CD4-positive, alpha-beta T cell (primary cell): ENCODE measurements at regions of chr17 and their contacts with region 1.

Region 1: DNA sequence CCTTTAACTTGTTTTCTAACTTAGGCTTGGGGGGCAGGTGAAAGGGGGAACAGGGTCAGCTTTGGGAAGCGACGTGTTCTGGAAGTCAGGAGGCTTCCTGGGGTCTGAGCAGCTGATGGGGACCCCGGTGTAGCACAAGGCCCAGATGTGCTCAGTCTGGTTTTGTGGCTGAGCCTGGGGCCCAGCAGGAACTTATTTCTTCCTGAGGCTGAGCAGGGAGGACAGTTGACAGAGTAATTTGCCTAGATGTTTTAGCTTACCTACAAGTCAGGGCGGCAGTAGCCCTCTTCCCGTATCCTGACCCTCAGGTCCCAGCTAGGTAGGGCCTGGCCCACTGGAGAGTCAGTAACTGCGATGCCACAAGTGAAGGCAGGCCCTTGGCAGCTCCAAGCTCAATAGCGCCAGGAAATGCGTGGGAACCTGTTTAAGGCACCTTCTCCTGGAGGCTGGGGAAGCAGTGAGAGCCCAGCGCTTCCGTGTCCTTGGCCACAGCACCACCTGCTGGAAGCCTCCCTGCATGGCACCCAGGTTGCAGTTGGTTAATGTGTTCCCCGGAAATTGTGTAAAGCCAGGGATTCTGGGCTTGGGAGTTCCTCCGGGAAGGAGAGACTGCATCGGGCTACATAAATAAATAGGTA is 5.2 kb downstream of the CCR7 start:
- DNase-seq: peak; percentile 74 to 90 (median 80)
- ATAC-seq: peak; percentile 33
- H3K4me3 ChIP-seq: peak overlapping the region; percentile 97
- H3K4me3 Mint-ChIP-seq: peak overlapping the region; percentile 91
- H3K27ac ChIP-seq: peak overlapping the region; percentile 92 to 100
- H3K27ac Mint-ChIP-seq: peak overlapping the region; percentile 92
- H3K4me1 ChIP-seq: peaks cover 97% of the 10 kb centered on the region
- H3K4me1 Mint-ChIP-seq: peaks cover 90% of the 10 kb centered on the region
- H3K27me3 ChIP-seq: no peaks in the 10 kb centered on the region
- H3K27me3 Mint-ChIP-seq: no peaks in the 10 kb centered on the region
- CTCF ChIP-seq: peak; percentile 97

Region 2: GRCh38 chr17:40355123-40355803 is 204.8 kb before region 1 on chr17:
- CTCF ChIA-PET with region 1: interaction called, 4 read pairs
- POLR2A ChIA-PET with region 1: no interaction called
- intact Hi-C with region 1: loop called (anchors 1 kb)
- DNase-seq: peak; percentile 65 to 86 (median 78)
- ATAC-seq: peak; percentile 76
- H3K4me3 ChIP-seq: no peak overlapping the region
- H3K4me3 Mint-ChIP-seq: no peak overlapping the region
- H3K27ac ChIP-seq: no peak overlapping the region
- H3K27ac Mint-ChIP-seq: peak overlapping the region; percentile 36
- H3K4me1 ChIP-seq: peaks cover 15% of the 10 kb centered on the region
- H3K4me1 Mint-ChIP-seq: peaks cover 17% of the 10 kb centered on the region
- H3K27me3 ChIP-seq: peaks cover 0 to 3% of the 10 kb centered on the region in 2 experiments
- H3K27me3 Mint-ChIP-seq: peaks cover 3% of the 10 kb centered on the region
- CTCF ChIP-seq: peak; percentile 95

Region 3: DNA sequence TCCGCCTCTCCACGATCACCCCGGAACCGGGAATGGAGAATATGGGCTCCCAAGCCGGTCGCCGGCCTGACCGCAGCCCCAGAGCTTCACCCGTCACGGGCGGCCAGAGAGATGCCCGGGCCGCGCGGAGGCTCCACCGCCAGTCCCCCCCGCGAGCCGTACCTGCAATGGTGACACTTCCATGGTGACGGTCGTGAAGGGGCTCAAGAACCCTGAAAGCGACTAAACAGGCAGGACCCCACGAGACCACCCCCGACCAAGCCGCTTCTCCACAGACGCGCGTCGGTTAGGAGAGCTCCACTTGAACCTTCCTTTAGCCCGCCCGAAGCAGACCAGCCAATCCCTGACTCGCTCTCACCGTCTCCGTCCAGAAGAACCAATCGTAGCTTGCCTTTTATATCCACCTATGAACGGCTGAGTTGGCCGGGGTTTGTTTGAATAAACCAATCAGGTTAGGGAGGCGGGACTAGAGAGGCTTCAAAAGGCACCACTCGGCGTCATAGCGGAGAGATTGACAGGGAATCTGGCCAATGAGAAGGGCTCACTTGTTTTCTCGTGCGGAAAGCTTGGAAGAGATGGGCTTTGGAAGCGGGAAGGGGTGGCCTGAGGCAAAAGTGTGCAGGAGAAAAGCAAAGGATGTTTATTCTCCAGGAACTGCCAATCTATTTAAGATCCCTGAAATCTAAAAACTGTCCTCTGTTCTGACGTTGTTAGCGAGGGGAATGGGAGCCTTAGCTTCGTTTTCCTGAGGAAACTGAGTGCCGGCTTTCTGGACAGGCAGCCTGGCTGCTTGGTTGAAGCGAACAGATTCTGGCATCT is 142.3 kb before region 1 on chr17 and contains the start of gene TOP2A:
- CTCF ChIA-PET with region 1: interaction called, 10 read pairs
- POLR2A ChIA-PET with region 1: interaction called, 13 read pairs
- intact Hi-C with region 1: no loop called
- DNase-seq: peak; percentile 86 to 99 (median 94)
- ATAC-seq: peak; percentile 99
- H3K4me3 ChIP-seq: peak within 1 kb of the TSS; percentile 72
- H3K4me3 Mint-ChIP-seq: peak within 1 kb of the TSS; percentile 87
- H3K27ac ChIP-seq: peak within 1 kb of the TSS in 1 of 2 donors; percentile 29
- H3K27ac Mint-ChIP-seq: peak within 1 kb of the TSS; percentile 74
- H3K4me1 ChIP-seq: peaks cover 32% of the 10 kb centered on the region
- H3K4me1 Mint-ChIP-seq: peaks cover 28% of the 10 kb centered on the region
- H3K27me3 ChIP-seq: peaks cover 0 to 4% of the 10 kb centered on the region in 2 experiments
- H3K27me3 Mint-ChIP-seq: no peaks in the 10 kb centered on the region
- CTCF ChIP-seq: no peak
- total RNA-seq, gene TOP2A: 3.6 to 3.8 TPM

Region 4: GRCh38 chr17:40536295-40537171 is 23.5 kb before region 1 on chr17:
- CTCF ChIA-PET with region 1: interaction called, 147 read pairs
- POLR2A ChIA-PET with region 1: interaction called, 668 read pairs
- intact Hi-C with region 1: loop called (anchors 1 to 2 kb)
- DNase-seq: peak in 1 of 14 experiments; percentile 2
- ATAC-seq: no peak
- H3K4me3 ChIP-seq: no peak overlapping the region
- H3K4me3 Mint-ChIP-seq: no peak overlapping the region
- H3K27ac ChIP-seq: no peak overlapping the region
- H3K27ac Mint-ChIP-seq: peak overlapping the region; percentile 98
- H3K4me1 ChIP-seq: peaks cover 88% of the 10 kb centered on the region
- H3K4me1 Mint-ChIP-seq: peaks cover 94% of the 10 kb centered on the region
- H3K27me3 ChIP-seq: no peaks in the 10 kb centered on the region
- H3K27me3 Mint-ChIP-seq: peaks cover 5% of the 10 kb centered on the region
- CTCF ChIP-seq: no peak

Region 5: GRCh38 chr17:40588552-40588951 is 28.5 kb after region 1 on chr17:
- CTCF ChIA-PET with region 1: interaction called, 10 read pairs
- POLR2A ChIA-PET with region 1: interaction called, 49 read pairs
- intact Hi-C with region 1: loop called in 1 of 2 experiments (anchors 2 kb)
- DNase-seq: peak in 4 of 14 experiments; percentile 45 to 64 (median 57)
- ATAC-seq: no peak
- H3K4me3 ChIP-seq: no peak overlapping the region
- H3K4me3 Mint-ChIP-seq: peak overlapping the region; percentile 62
- H3K27ac ChIP-seq: peak overlapping the region in 1 of 2 donors; percentile 4
- H3K27ac Mint-ChIP-seq: peak overlapping the region; percentile 97
- H3K4me1 ChIP-seq: peaks cover 23% of the 10 kb centered on the region
- H3K4me1 Mint-ChIP-seq: peaks cover 86% of the 10 kb centered on the region
- H3K27me3 ChIP-seq: no peaks in the 10 kb centered on the region
- H3K27me3 Mint-ChIP-seq: no peaks in the 10 kb centered on the region
- CTCF ChIP-seq: no peak

Region 6: DNA sequence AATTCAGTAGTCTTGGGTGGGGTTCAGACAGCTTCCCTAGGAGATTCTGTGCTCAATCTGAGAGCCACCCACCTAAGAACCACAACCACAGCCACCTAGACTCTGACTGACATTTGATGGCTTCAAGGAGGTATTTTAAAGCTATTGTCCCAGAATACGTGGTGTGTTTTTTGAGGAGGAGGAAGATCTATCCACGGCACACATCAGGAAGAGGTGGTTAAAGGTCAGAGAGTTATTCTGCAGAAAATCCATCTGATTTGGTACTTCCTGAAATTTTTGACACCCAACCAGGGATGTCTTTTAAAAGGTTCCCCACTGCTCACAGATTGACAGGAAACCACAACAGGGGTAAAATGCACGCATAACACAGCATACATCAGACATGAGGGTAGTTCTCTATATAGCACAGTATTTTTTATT is 62.4 kb after region 1 on chr17:
- CTCF ChIA-PET with region 1: interaction called, 288 read pairs
- POLR2A ChIA-PET with region 1: interaction called, 1,290 read pairs
- intact Hi-C with region 1: no loop called
- DNase-seq: peak in 3 of 14 experiments; percentile 56 to 71 (median 69)
- ATAC-seq: peak; percentile 65
- H3K4me3 ChIP-seq: no peak overlapping the region
- H3K4me3 Mint-ChIP-seq: peak overlapping the region; percentile 71
- H3K27ac ChIP-seq: peak overlapping the region in 1 of 2 donors; percentile 31
- H3K27ac Mint-ChIP-seq: peak overlapping the region; percentile 70
- H3K4me1 ChIP-seq: peaks cover 29% of the 10 kb centered on the region
- H3K4me1 Mint-ChIP-seq: peaks cover 54% of the 10 kb centered on the region
- H3K27me3 ChIP-seq: no peaks in the 10 kb centered on the region
- H3K27me3 Mint-ChIP-seq: no peaks in the 10 kb centered on the region
- CTCF ChIP-seq: no peak

Region 7: DNA sequence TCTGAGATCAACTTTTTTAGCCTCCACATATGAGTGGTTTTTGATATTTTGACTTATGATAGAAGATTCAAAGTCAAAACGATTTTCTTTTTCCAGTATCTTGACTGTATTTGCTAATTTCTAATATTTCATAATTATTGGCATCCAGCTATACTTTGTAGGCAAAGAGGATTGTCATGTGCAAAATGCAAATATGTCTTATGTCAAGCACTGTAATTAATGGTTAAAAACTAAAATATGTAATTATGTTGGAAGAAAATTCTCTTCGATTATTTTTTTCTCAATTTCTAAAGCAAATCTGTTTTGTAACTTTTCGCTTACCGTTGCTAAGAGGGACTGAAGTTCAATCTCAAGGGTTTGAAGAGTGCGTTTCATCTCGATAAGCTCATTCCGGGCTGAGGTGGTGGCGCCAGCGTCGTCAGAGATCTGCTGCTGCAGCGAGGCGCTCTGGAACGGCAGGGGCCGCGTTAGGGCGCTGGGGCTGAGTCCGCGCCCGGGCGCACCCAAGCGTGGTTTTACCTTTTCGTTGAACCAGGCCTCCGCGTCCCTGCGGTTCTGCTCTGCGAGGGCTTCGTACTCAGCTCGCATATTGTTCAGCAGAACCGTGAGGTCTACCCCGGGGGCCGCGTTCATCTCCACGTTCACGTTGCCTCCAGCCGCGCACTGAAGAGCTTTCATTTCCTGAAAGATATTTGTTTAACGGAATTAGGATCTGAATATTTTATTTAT is 219.3 kb after region 1 on chr17:
- CTCF ChIA-PET with region 1: no interaction called
- POLR2A ChIA-PET with region 1: no interaction called
- intact Hi-C with region 1: no loop called
- DNase-seq: peak in 8 of 14 experiments; percentile 1 to 45 (median 20)
- ATAC-seq: peak; percentile 76
- H3K4me3 ChIP-seq: peak overlapping the region; percentile 31
- H3K4me3 Mint-ChIP-seq: peak overlapping the region; percentile 66
- H3K27ac ChIP-seq: no peak overlapping the region
- H3K27ac Mint-ChIP-seq: no peak overlapping the region
- H3K4me1 ChIP-seq: no peaks in the 10 kb centered on the region
- H3K4me1 Mint-ChIP-seq: no peaks in the 10 kb centered on the region
- H3K27me3 ChIP-seq: peaks cover 34 to 45% of the 10 kb centered on the region in 2 experiments
- H3K27me3 Mint-ChIP-seq: peaks cover 68% of the 10 kb centered on the region
- CTCF ChIP-seq: no peak